ENCODE measurements at regions of chr6 and their contacts with region 1.

Region 1: DNA sequence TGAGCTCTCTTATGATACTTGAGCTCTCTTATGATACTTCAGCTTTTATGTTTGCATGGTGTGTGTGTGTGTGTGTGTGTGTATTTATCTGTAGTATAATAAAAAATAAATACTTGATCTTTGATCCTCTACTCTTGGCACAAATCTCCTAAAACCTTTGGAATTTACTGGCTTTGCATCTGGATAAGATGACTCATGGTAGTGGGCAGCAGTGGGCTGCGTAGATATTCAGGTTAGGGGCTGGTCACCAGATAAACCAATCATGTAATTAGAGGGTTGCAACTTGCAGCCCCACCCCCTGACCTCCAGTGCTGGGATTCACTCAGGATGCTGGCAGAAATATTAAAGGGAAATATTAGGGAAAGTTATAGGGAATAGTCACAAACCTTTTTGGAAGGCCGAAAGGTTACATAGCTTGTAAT is 151.9 kb upstream of the COL21A1 start:
- DNase-seq: peak; percentile 78 to 86
- H3K4me3 ChIP-seq: no peak overlapping the region
- H3K4me3 Mint-ChIP-seq: peak overlapping the region; percentile 71
- H3K27ac Mint-ChIP-seq: peak overlapping the region; percentile 97
- H3K4me1 ChIP-seq: peaks cover 36% of the 10 kb centered on the region
- H3K4me1 Mint-ChIP-seq: peaks cover 52% of the 10 kb centered on the region
- H3K27me3 ChIP-seq: no peaks in the 10 kb centered on the region
- H3K27me3 Mint-ChIP-seq: no peaks in the 10 kb centered on the region
- CTCF ChIP-seq: no peak

Region 2: GRCh38 chr6:56378996-56379618 is 20.2 kb before region 1 on chr6:
- CTCF ChIA-PET with region 1: no interaction called
- POLR2A ChIA-PET with region 1: no interaction called
- intact Hi-C with region 1: loop called (anchors 1 kb)
- DNase-seq: peak in 1 of 2 experiments; percentile 52
- H3K4me3 ChIP-seq: no peak overlapping the region
- H3K4me3 Mint-ChIP-seq: no peak overlapping the region
- H3K27ac Mint-ChIP-seq: peak overlapping the region; percentile 3
- H3K4me1 ChIP-seq: peaks cover 14% of the 10 kb centered on the region
- H3K4me1 Mint-ChIP-seq: peaks cover 25% of the 10 kb centered on the region
- H3K27me3 ChIP-seq: no peaks in the 10 kb centered on the region
- H3K27me3 Mint-ChIP-seq: no peaks in the 10 kb centered on the region
- CTCF ChIP-seq: no peak

Region 3: GRCh38 chr6:56459025-56459810 is 60.0 kb after region 1 on chr6:
- CTCF ChIA-PET with region 1: interaction called, 3 read pairs
- POLR2A ChIA-PET with region 1: no interaction called
- intact Hi-C with region 1: loop called (anchors 1 kb)
- DNase-seq: peak in 1 of 2 experiments; percentile 28
- H3K4me3 ChIP-seq: no peak overlapping the region
- H3K4me3 Mint-ChIP-seq: no peak overlapping the region
- H3K27ac Mint-ChIP-seq: peak overlapping the region; percentile 39
- H3K4me1 ChIP-seq: peaks cover 12% of the 10 kb centered on the region
- H3K4me1 Mint-ChIP-seq: no peaks in the 10 kb centered on the region
- H3K27me3 ChIP-seq: no peaks in the 10 kb centered on the region
- H3K27me3 Mint-ChIP-seq: no peaks in the 10 kb centered on the region
- CTCF ChIP-seq: no peak